ENCODE measurements at regions of chr2 and their contacts with region 1.

Region 1: GRCh38 chr2:133171393-133172004 is 396.8 kb downstream of the NCKAP5 start:
- DNase-seq: no peak
- ATAC-seq: no peak
- H3K4me3 Mint-ChIP-seq: no peak overlapping the region
- H3K27ac Mint-ChIP-seq: no peak overlapping the region
- H3K4me1 Mint-ChIP-seq: no peaks in the 10 kb centered on the region
- H3K27me3 Mint-ChIP-seq: peaks cover 3% of the 10 kb centered on the region
- CTCF ChIP-seq: peak; percentile 29

Region 2: DNA sequence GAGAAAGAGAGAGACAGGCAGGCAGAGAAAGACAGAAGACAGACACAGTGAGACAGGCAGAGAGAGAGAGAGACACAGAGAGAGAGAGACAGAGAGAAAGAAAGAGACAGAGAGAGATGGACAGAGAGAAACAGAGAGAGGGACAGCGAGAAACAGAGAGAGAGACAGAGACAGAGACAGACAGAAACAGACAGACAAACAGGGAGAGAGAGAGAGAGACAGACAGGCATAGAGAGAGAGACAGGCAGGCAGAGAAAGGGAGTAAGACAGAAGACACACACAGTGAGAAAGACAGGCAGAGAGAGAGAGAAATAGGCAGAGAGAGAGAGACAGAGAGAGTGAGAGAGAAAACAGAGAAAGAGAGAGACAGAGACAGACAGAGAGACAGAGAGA is 904.4 kb before region 1 on chr2:
- CTCF ChIA-PET with region 1: no interaction called
- POLR2A ChIA-PET with region 1: no interaction called
- intact Hi-C with region 1: loop called (anchors 10 kb)
- DNase-seq: no peak
- ATAC-seq: no peak
- H3K4me3 Mint-ChIP-seq: no peak overlapping the region
- H3K27ac Mint-ChIP-seq: no peak overlapping the region
- H3K4me1 Mint-ChIP-seq: peaks cover 3% of the 10 kb centered on the region
- H3K27me3 Mint-ChIP-seq: peaks cover 3% of the 10 kb centered on the region
- CTCF ChIP-seq: no peak

Region 3: DNA sequence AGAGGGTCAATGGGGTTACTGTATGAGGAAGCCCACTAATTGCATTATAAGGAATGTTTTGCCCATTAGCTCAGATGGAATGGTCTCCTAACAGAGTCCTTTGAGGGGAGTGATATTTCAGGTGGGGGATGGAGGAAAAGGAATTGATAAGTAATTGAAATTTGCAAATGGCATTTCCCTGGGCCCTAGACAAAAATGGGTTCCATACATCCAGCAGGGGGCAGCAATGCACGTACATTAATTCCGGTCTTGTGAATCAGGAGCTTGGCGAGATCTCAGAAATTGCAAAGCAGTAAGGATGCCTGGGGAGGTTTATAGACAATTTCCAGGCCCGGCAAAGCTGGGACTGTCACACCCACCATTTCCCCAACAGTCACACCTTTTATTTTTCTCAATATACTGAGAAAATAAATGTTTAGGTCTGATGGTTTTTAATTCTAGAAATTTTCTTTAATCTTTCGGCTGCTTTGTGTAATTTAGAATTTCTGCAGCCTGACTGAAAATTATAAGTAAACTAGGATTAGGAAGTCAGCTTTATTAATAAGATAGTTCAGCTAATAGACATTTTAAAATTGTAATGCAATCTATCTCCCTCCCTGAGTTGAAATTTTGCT is 624.3 kb before region 1 on chr2:
- CTCF ChIA-PET with region 1: interaction called, 19 read pairs
- POLR2A ChIA-PET with region 1: no interaction called
- intact Hi-C with region 1: no loop called
- DNase-seq: no peak
- ATAC-seq: no peak
- H3K4me3 Mint-ChIP-seq: no peak overlapping the region
- H3K27ac Mint-ChIP-seq: no peak overlapping the region
- H3K4me1 Mint-ChIP-seq: no peaks in the 10 kb centered on the region
- H3K27me3 Mint-ChIP-seq: no peaks in the 10 kb centered on the region
- CTCF ChIP-seq: peak; percentile 41

Region 4: DNA sequence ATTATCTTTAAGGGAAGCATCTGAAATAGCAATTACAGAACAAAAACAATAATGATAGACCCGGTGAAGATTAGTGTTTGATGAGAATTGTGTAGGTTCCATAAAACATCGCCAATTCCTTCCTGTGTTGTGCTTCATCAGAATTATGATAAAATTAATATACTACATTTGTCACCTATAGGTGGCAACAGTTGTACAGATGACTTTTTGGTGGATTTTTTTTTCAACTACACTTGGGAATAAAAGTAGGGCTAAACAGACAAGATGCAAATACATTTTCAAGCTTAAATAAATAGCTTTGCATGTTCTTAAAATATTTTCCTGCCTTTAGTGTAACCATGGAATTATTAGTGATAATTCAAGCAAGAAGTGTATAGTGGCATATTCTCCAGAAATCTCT is 494.5 kb before region 1 on chr2:
- CTCF ChIA-PET with region 1: no interaction called
- POLR2A ChIA-PET with region 1: no interaction called
- intact Hi-C with region 1: loop called (anchors 5 kb)
- DNase-seq: no peak
- ATAC-seq: no peak
- H3K4me3 Mint-ChIP-seq: no peak overlapping the region
- H3K27ac Mint-ChIP-seq: no peak overlapping the region
- H3K4me1 Mint-ChIP-seq: no peaks in the 10 kb centered on the region
- H3K27me3 Mint-ChIP-seq: peaks cover 29% of the 10 kb centered on the region
- CTCF ChIP-seq: no peak

Measured in activated B cell treated with CpG ODN at 0.5 μM for 24 hours (primary cell).